IMR-90 (cell line): ENCODE measurements at regions of chr4 and their contacts with region 1.

Region 1: DNA sequence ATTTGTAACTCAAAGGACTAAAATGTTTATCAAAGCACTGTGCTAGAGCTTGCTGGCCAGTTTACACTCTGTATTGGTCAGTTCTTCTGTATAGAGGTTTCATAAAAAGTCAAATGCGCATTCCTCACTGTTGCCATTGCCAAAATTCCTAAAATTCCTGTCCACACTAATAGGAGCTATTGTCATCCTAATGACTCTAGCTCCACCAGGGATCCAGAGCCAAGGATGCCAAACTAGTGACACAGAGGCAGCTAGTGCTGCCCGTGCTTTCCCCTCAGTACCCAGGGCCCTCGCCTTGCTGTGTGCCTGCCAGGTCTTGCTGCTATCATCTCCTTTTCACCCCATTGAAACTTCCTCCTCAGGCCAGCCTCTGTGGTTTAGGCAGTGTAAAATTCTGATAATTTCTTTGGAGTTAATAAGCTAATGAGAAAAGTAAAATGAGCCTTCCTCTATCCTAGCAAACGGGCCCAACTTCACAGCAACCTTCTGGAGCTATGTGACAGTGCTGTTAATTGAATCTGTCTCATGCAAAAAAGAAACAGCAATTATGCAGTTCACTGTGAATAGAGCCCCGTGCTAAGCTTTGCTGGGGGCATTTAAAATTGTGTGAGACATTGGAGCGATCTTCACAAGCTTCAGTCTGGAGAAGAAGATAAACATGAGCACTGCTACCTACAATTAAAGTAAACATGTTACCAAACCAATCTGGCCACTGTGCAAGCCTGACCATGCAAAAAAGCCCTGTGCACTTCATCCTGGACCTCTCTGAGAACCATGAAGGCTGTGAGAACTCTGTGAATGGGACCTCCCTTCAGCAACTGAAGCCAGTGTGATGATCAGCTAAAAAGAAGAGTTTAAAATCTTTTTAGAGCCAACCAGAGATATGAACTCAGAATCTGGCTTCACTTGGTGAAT is 43.1 kb upstream of the FGF2 start:
- DNase-seq: peak; percentile 87
- ATAC-seq: peak; percentile 96
- H3K4me3 ChIP-seq: no peak overlapping the region
- H3K27ac ChIP-seq: peak overlapping the region; percentile 19
- H3K4me1 ChIP-seq: peaks cover 7% of the 10 kb centered on the region
- H3K27me3 ChIP-seq: no peaks in the 10 kb centered on the region
- CTCF ChIP-seq: no peak
- POLR2A ChIP-seq: no peak
- RAD21 ChIP-seq: no peak

Region 2: GRCh38 chr4:122796801-122797404 is 13.3 kb after region 1 on chr4:
- CTCF ChIA-PET with region 1: no interaction called
- POLR2A ChIA-PET with region 1: interaction called, 3 read pairs
- dilution Hi-C with region 1: no loop called
- in situ Hi-C with region 1: no loop called
- intact Hi-C with region 1: loop called (anchors 1 kb)
- DNase-seq: peak; percentile 28
- ATAC-seq: 0 out of 2 replicates have a peak, but pooled peaks have one; percentile 10
- H3K4me3 ChIP-seq: no peak overlapping the region
- H3K27ac ChIP-seq: peak overlapping the region; percentile 96
- H3K4me1 ChIP-seq: peaks cover 13% of the 10 kb centered on the region
- H3K27me3 ChIP-seq: no peaks in the 10 kb centered on the region
- CTCF ChIP-seq: no peak
- POLR2A ChIP-seq: no peak
- RAD21 ChIP-seq: no peak